Naive thymus-derived CD4-positive, alpha-beta T cell (primary cell): ENCODE measurements at regions of chr12 and their contacts with region 1.

Region 1: GRCh38 chr12:105107494-105108371 is at the start of gene WASHC4:
- DNase-seq: peak; percentile 87 to 97 (median 90)
- ATAC-seq: peak; percentile 99
- H3K4me3 ChIP-seq: peak within 1 kb of the TSS; percentile 68
- H3K4me3 Mint-ChIP-seq: peak within 1 kb of the TSS; percentile 89 to 99 (median 96)
- H3K27ac ChIP-seq: peak within 1 kb of the TSS; percentile 93
- H3K27ac Mint-ChIP-seq: peak within 1 kb of the TSS; percentile 77 to 96 (median 95)
- H3K4me1 ChIP-seq: peaks cover 13 to 16% of the 10 kb centered on the region in 2 donors
- H3K4me1 Mint-ChIP-seq: peaks cover 20 to 45% (median 38%) of the 10 kb centered on the region in 7 donors
- H3K27me3 ChIP-seq: no peaks in the 10 kb centered on the region
- H3K27me3 Mint-ChIP-seq: peaks cover 3 to 27% (median 22%) of the 10 kb centered on the region in 5 donors
- total RNA-seq, gene WASHC4: 43.2 to 76.8 (median 53.0) TPM

Region 2: DNA sequence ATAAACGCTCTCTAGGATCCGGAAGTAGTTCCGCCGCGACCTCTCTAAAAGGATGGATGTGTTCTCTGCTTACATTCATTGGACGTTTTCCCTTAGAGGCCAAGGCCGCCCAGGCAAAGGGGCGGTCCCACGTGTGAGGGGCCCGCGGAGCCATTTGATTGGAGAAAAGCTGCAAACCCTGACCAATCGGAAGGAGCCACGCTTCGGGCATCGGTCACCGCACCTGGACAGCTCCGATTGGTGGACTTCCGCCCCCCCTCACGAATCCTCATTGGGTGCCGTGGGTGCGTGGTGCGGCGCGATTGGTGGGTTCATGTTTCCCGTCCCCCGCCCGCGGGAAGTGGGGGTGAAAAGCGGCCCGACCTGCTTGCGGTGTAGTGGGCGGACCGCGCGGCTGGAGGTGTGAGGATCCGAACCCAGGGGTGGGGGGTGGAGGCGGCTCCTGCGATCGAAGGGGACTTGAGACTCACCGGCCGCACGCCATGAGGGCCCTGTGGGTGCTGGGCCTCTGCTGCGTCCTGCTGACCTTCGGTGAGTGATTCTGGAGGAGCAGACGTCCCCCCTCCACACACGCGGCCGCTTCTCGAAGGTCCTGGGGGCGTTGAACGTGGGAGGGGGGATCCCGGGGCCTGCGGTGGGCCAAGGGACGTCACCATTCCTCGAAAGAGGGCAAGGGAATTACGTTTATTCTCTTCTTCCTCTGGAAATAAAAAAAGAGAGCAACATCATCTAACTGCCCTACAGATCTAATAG is 1177.5 kb before region 1 on chr12 and contains the start of gene HSP90B1:
- CTCF ChIA-PET with region 1: no interaction called
- POLR2A ChIA-PET with region 1: no interaction called
- intact Hi-C with region 1: loop called (anchors 1 kb)
- DNase-seq: peak; percentile 95 to 100 (median 99)
- ATAC-seq: peak; percentile 84
- H3K4me3 ChIP-seq: peak within 1 kb of the TSS; percentile 76
- H3K4me3 Mint-ChIP-seq: peak within 1 kb of the TSS; percentile 84 to 99 (median 92)
- H3K27ac ChIP-seq: peak within 1 kb of the TSS; percentile 100
- H3K27ac Mint-ChIP-seq: peak within 1 kb of the TSS; percentile 97 to 100 (median 100)
- H3K4me1 ChIP-seq: peaks cover 36 to 45% of the 10 kb centered on the region in 2 donors
- H3K4me1 Mint-ChIP-seq: peaks cover 42 to 67% (median 53%) of the 10 kb centered on the region in 7 donors
- H3K27me3 ChIP-seq: no peaks in the 10 kb centered on the region
- H3K27me3 Mint-ChIP-seq: peaks cover 0 to 4% (median 0%) of the 10 kb centered on the region in 5 donors
- total RNA-seq, gene HSP90B1: 226 to 461 (median 436) TPM

Region 3: DNA sequence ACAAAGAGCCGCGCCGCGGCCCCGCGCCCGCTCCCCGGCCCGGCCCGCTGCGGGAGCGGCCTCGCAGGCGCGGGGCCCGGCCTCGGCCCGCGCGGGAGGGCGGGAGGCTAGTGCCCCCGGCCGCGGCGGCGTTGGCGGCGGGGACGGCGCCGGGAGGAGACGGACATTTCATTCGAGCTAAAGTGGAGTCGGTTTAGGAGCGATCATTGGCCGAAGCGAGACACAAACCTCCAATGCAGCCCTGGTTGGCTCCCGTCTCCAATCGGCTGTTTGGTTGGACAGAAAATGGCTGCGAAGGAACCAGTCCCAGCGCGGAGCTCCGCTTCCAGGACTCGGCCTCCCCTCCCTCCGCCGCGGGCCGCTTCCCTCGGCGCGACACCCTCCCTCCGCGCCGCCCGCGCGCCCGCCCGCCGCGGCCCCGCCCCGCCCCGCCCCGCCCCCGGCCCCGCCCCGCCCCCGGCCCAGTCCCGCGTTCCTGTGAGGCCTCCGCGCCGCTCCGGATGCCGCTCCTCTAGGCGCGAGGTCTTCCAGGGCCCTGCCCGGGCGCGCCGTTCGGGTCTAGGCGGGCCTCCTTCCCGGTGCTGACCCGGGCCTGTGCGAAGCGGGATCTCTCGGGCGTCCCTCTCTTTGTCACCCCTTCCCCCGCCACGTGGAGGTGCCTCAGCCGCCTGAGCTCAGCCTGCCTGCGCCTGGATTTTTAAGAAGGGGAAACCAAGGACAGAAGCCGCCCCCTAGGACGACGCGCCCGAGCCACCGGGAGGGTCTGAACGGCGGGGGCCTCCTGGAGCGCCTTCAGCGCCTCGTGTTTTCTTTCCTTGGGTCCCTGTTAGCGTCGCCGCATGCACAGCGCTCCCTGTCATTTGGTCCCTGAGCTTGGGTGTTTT is 969.6 kb before region 1 on chr12 and contains the start of gene NFYB:
- CTCF ChIA-PET with region 1: no interaction called
- POLR2A ChIA-PET with region 1: interaction called, 6 read pairs
- intact Hi-C with region 1: loop called (anchors 1 to 5 kb)
- DNase-seq: peak; percentile 90 to 96 (median 94)
- ATAC-seq: peak; percentile 97
- H3K4me3 ChIP-seq: peak within 1 kb of the TSS; percentile 69
- H3K4me3 Mint-ChIP-seq: peak within 1 kb of the TSS; percentile 81 to 93 (median 90)
- H3K27ac ChIP-seq: peak within 1 kb of the TSS; percentile 72
- H3K27ac Mint-ChIP-seq: peak within 1 kb of the TSS; percentile 71 to 95 (median 89)
- H3K4me1 ChIP-seq: peaks cover 10 to 23% of the 10 kb centered on the region in 2 donors
- H3K4me1 Mint-ChIP-seq: peaks cover 0 to 22% (median 9%) of the 10 kb centered on the region in 7 donors
- H3K27me3 ChIP-seq: no peaks in the 10 kb centered on the region
- H3K27me3 Mint-ChIP-seq: peaks cover 0 to 24% (median 0%) of the 10 kb centered on the region in 5 donors
- total RNA-seq, gene NFYB: 11.6 to 25.9 (median 24.4) TPM

Region 4: GRCh38 chr12:104456417-104456949 is 651.2 kb before region 1 on chr12 and contains the start of gene CHST11:
- CTCF ChIA-PET with region 1: no interaction called
- POLR2A ChIA-PET with region 1: interaction called, 6 read pairs
- intact Hi-C with region 1: loop called (anchors 5 kb)
- DNase-seq: peak in 8 of 9 donors; percentile 33 to 84 (median 60)
- ATAC-seq: peak; percentile 83
- H3K4me3 ChIP-seq: peak within 1 kb of the TSS; percentile 83
- H3K4me3 Mint-ChIP-seq: peak within 1 kb of the TSS; percentile 75 to 100 (median 99)
- H3K27ac ChIP-seq: peak within 1 kb of the TSS; percentile 85
- H3K27ac Mint-ChIP-seq: peak within 1 kb of the TSS; percentile 84 to 99 (median 95)
- H3K4me1 ChIP-seq: peaks cover 25% of the 10 kb centered on the region in 2 donors
- H3K4me1 Mint-ChIP-seq: peaks cover 19 to 47% (median 36%) of the 10 kb centered on the region in 7 donors
- H3K27me3 ChIP-seq: no peaks in the 10 kb centered on the region
- H3K27me3 Mint-ChIP-seq: peaks cover 0 to 7% (median 0%) of the 10 kb centered on the region in 5 donors
- total RNA-seq, gene CHST11: 31.9 to 74.3 (median 42.0) TPM

Region 5: GRCh38 chr12:104720339-104721038 is 387.2 kb before region 1 on chr12:
- CTCF ChIA-PET with region 1: interaction called, 3 read pairs
- POLR2A ChIA-PET with region 1: no interaction called
- intact Hi-C with region 1: loop called in 1 of 2 experiments (anchors 1 kb)
- DNase-seq: peak; percentile 32 to 92 (median 88)
- ATAC-seq: peak; percentile 87
- H3K4me3 ChIP-seq: peak overlapping the region; percentile 72
- H3K4me3 Mint-ChIP-seq: peak overlapping the region; percentile 73 to 95 (median 81)
- H3K27ac ChIP-seq: peak overlapping the region; percentile 77
- H3K27ac Mint-ChIP-seq: peak overlapping the region; percentile 86 to 96 (median 92)
- H3K4me1 ChIP-seq: peaks cover 30 to 39% of the 10 kb centered on the region in 2 donors
- H3K4me1 Mint-ChIP-seq: peaks cover 41 to 82% (median 65%) of the 10 kb centered on the region in 7 donors
- H3K27me3 ChIP-seq: no peaks in the 10 kb centered on the region
- H3K27me3 Mint-ChIP-seq: peaks cover 0 to 3% (median 0%) of the 10 kb centered on the region in 5 donors

Region 6: GRCh38 chr12:105047308-105047707 is 60.4 kb before region 1 on chr12:
- CTCF ChIA-PET with region 1: no interaction called
- POLR2A ChIA-PET with region 1: no interaction called
- intact Hi-C with region 1: no loop called
- DNase-seq: no peak
- ATAC-seq: no peak
- H3K4me3 ChIP-seq: no peak overlapping the region
- H3K4me3 Mint-ChIP-seq: no peak overlapping the region
- H3K27ac ChIP-seq: no peak overlapping the region
- H3K27ac Mint-ChIP-seq: no peak overlapping the region
- H3K4me1 ChIP-seq: no peaks in the 10 kb centered on the region
- H3K4me1 Mint-ChIP-seq: no peaks in the 10 kb centered on the region
- H3K27me3 ChIP-seq: no peaks in the 10 kb centered on the region
- H3K27me3 Mint-ChIP-seq: no peaks in the 10 kb centered on the region

Region 7: GRCh38 chr12:105120551-105120950 is 12.8 kb after region 1 on chr12:
- CTCF ChIA-PET with region 1: no interaction called
- POLR2A ChIA-PET with region 1: interaction called, 4 read pairs
- intact Hi-C with region 1: loop called in 1 of 2 experiments (anchors 1 kb)
- DNase-seq: no peak
- ATAC-seq: no peak
- H3K4me3 ChIP-seq: no peak overlapping the region
- H3K4me3 Mint-ChIP-seq: no peak overlapping the region
- H3K27ac ChIP-seq: no peak overlapping the region
- H3K27ac Mint-ChIP-seq: no peak overlapping the region
- H3K4me1 ChIP-seq: no peaks in the 10 kb centered on the region
- H3K4me1 Mint-ChIP-seq: peaks cover 0 to 11% (median 0%) of the 10 kb centered on the region in 7 donors
- H3K27me3 ChIP-seq: no peaks in the 10 kb centered on the region
- H3K27me3 Mint-ChIP-seq: no peaks in the 10 kb centered on the region

Region 8: GRCh38 chr12:106774005-106774807 is 1666.5 kb after region 1 on chr12 and contains the start of gene RIC8B:
- CTCF ChIA-PET with region 1: no interaction called
- POLR2A ChIA-PET with region 1: no interaction called
- intact Hi-C with region 1: loop called in 1 of 2 experiments (anchors 10 kb)
- DNase-seq: peak; percentile 63 to 84 (median 70)
- ATAC-seq: peak; percentile 91
- H3K4me3 ChIP-seq: peak within 1 kb of the TSS; percentile 84
- H3K4me3 Mint-ChIP-seq: peak within 1 kb of the TSS; percentile 92 to 100 (median 97)
- H3K27ac ChIP-seq: peak within 1 kb of the TSS; percentile 88
- H3K27ac Mint-ChIP-seq: peak within 1 kb of the TSS; percentile 94 to 99 (median 97)
- H3K4me1 ChIP-seq: peaks cover 0 to 19% of the 10 kb centered on the region in 2 donors
- H3K4me1 Mint-ChIP-seq: peaks cover 22 to 49% (median 39%) of the 10 kb centered on the region in 7 donors
- H3K27me3 ChIP-seq: no peaks in the 10 kb centered on the region
- H3K27me3 Mint-ChIP-seq: peaks cover 0 to 7% (median 0%) of the 10 kb centered on the region in 5 donors
- total RNA-seq, gene RIC8B: 9.8 to 21.1 (median 15.6) TPM